Calu3 (cell line): ENCODE measurements at regions of chr4 and their contacts with region 1.

Region 1: DNA sequence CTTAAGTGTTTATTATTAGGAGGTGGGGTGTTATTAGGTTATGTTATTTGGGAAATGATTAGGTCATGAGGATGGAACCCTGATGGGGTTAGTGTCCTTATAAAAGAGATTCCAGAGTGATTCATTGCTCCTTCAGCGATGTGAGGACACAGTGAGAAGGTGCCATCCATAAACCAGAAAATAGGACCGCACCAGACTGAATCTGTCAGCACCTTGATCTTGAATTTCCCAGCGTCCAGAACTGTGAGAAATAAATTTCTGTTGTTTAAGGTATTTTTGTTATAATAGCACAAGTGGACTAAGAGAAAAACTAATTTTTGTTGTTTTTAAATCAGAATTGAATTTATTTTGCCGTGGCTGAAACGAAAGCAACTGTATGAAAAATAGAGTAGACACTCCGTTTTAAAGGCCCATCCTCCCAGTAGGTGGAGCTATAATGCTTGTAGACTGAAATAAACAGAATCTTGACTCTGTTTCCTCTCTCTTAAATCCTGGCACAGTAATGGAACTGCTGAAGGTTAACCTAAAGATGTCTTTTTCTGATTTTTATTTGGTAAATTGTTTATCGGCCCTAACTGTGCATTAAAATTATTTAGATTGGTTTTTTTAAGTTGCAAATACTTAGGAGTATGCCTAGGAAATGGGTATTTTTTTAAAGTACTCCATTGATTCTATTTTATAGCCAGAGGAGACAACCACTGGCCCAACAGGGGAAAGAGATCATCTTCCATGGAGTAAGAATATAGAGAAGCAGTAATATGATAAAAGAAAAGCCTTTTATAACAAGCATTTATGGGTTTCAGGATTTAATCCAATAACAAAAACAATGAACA is 133.2 kb upstream of the ADAMTS3 start:
- DNase-seq: peak; percentile 28
- H3K4me3 Mint-ChIP-seq: peak overlapping the region; percentile 50
- H3K27ac Mint-ChIP-seq: no peak overlapping the region
- H3K4me1 Mint-ChIP-seq: no peaks in the 10 kb centered on the region
- H3K27me3 Mint-ChIP-seq: peaks cover 3% of the 10 kb centered on the region
- CTCF ChIP-seq: no peak

Region 2: DNA sequence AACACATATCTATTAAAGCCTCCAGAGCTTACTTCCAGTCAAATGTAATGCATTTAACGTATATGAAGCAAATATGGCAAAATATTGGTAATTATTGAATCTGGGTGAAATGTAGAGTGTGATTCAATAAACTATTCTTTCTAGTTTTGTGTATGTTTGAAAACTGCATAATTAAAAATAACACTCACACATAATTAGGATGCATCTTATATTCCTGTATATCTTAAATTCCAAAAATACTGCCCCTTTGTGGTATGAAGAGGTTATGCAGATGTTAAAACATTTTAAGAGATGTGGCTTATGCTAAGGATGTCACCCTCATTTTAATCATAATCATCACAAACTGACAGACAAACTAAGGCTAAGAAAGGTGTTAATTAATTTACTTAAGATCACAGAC is 184.4 kb after region 1 on chr4:
- CTCF ChIA-PET with region 1: interaction called, 4 read pairs
- intact Hi-C with region 1: loop called (anchors 5 kb)
- DNase-seq: no peak
- H3K4me3 Mint-ChIP-seq: no peak overlapping the region
- H3K27ac Mint-ChIP-seq: no peak overlapping the region
- H3K4me1 Mint-ChIP-seq: no peaks in the 10 kb centered on the region
- H3K27me3 Mint-ChIP-seq: peaks cover 12% of the 10 kb centered on the region
- CTCF ChIP-seq: no peak